A673 (cell line): ENCODE measurements at regions of chr4 and their contacts with region 1.

Region 1: GRCh38 chr4:89434364-89434988 is 126.9 kb upstream of the GPRIN3 start:
- DNase-seq: peak; percentile 25
- H3K4me3 ChIP-seq: no peak overlapping the region
- H3K27ac ChIP-seq: no peak overlapping the region
- H3K4me1 ChIP-seq: no peaks in the 10 kb centered on the region
- H3K27me3 ChIP-seq: no peaks in the 10 kb centered on the region
- CTCF ChIP-seq: peak; percentile 57

Region 2: GRCh38 chr4:88900432-88900831 is 534.0 kb before region 1 on chr4:
- CTCF ChIA-PET with region 1: no interaction called
- POLR2A ChIA-PET with region 1: no interaction called
- intact Hi-C with region 1: no loop called
- DNase-seq: no peak
- H3K4me3 ChIP-seq: no peak overlapping the region
- H3K27ac ChIP-seq: no peak overlapping the region
- H3K4me1 ChIP-seq: no peaks in the 10 kb centered on the region
- H3K27me3 ChIP-seq: no peaks in the 10 kb centered on the region
- CTCF ChIP-seq: no peak

Region 3: DNA sequence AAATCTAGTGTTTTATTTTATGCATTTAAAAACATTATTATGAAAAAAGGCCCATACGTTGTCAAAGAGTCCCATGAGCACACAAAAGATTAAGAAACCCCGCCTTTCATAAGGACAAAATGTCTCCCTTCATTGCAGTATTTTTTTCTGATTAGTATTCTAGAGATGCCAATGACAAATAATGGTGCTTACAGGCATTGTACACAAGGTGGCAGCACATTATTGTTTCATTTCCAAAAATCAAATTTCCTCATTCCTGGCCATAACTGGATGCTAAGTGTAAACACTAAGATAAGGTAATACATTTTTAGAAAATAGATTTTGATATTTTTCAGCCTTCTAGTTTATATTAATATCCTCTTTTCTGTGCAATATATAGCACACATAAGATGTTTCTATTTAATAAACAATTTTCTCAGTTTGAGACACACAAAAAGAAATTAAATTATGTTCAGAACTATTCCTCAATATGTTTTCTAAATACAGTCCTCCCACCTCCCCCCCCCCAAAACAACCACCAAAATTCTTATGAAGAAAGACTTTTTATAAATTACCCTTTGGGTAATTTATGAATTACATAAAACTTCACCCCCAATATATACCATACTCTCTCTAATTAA is 275.5 kb before region 1 on chr4:
- CTCF ChIA-PET with region 1: no interaction called
- POLR2A ChIA-PET with region 1: no interaction called
- intact Hi-C with region 1: loop called (anchors 2 kb)
- DNase-seq: peak; percentile 43
- H3K4me3 ChIP-seq: no peak overlapping the region
- H3K27ac ChIP-seq: no peak overlapping the region
- H3K4me1 ChIP-seq: no peaks in the 10 kb centered on the region
- H3K27me3 ChIP-seq: peaks cover 8% of the 10 kb centered on the region
- CTCF ChIP-seq: peak; percentile 65

Region 4: DNA sequence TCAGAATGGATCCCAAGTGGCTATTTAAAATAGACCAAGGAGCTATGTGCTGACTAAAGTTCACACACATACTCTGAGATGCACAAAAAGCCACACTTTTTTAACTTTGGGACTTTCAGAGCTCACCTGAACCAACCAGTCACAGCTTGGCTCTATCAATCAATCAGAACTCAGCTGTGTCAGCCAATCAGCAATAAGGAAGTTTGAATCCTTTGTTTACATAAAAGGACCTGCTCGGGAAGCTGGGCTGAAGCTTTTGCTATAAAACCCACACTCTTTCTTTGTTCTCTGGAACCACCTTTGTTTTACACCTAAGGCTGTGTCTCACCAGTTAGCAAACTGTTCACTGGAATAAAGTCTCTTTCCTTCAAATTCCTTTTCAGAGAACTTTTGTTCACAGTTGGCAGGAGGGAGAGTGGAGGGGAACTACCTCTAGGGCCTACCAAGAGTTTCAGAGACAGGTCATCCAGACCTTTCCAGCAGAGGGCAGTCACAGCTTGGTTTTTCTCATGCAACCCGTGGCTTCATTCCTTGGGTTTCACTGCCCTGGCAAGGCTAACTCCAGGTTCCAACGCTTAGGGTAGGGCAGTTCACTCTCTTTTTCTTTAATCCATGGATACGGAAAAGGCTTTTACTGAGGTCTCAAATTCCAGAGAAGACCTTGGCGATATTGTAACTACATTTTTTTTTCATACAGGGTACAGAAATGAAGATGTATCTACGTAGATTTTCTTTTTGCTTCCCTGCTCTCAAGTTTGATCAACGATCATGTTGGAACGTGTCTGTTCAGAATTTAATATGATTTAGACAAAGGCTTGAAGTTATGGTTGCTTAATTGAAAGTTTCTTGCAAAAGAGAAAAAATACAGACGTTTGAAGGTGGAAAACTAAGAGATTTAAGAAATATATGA is 207.6 kb before region 1 on chr4:
- CTCF ChIA-PET with region 1: no interaction called
- POLR2A ChIA-PET with region 1: no interaction called
- intact Hi-C with region 1: loop called (anchors 5 kb)
- DNase-seq: peak; percentile 59
- H3K4me3 ChIP-seq: no peak overlapping the region
- H3K27ac ChIP-seq: no peak overlapping the region
- H3K4me1 ChIP-seq: no peaks in the 10 kb centered on the region
- H3K27me3 ChIP-seq: no peaks in the 10 kb centered on the region
- CTCF ChIP-seq: peak; percentile 62

Region 5: GRCh38 chr4:89254847-89255246 is 179.6 kb before region 1 on chr4:
- CTCF ChIA-PET with region 1: no interaction called
- POLR2A ChIA-PET with region 1: no interaction called
- intact Hi-C with region 1: loop called (anchors 10 kb)
- DNase-seq: peak; percentile 10
- H3K4me3 ChIP-seq: no peak overlapping the region
- H3K27ac ChIP-seq: no peak overlapping the region
- H3K4me1 ChIP-seq: no peaks in the 10 kb centered on the region
- H3K27me3 ChIP-seq: no peaks in the 10 kb centered on the region
- CTCF ChIP-seq: peak; percentile 73

Region 6: GRCh38 chr4:89463341-89463740 is 28.9 kb after region 1 on chr4:
- CTCF ChIA-PET with region 1: no interaction called
- POLR2A ChIA-PET with region 1: no interaction called
- intact Hi-C with region 1: no loop called
- DNase-seq: no peak
- H3K4me3 ChIP-seq: no peak overlapping the region
- H3K27ac ChIP-seq: no peak overlapping the region
- H3K4me1 ChIP-seq: no peaks in the 10 kb centered on the region
- H3K27me3 ChIP-seq: no peaks in the 10 kb centered on the region
- CTCF ChIP-seq: no peak

Region 7: DNA sequence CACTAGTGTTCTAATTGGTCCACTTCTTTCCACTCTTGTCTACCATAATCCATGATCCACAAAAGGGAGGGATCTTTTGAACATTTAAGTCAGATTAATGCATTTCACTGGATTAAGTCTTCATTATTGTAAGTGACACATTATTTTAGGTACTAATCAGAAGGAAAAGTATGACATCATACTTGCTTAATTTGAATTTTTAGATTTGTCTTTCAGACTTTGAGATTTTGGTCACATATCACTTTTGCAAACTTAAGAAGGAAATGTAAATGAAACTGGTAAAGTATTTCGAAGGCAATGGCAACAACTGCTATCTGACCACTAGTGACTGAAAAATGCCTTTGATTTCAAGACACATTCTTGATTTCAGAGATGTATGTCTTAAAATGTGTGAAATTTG is 465.4 kb after region 1 on chr4:
- CTCF ChIA-PET with region 1: no interaction called
- POLR2A ChIA-PET with region 1: no interaction called
- intact Hi-C with region 1: loop called (anchors 2 kb)
- DNase-seq: no peak
- H3K4me3 ChIP-seq: no peak overlapping the region
- H3K27ac ChIP-seq: no peak overlapping the region
- H3K4me1 ChIP-seq: peaks cover 4% of the 10 kb centered on the region
- H3K27me3 ChIP-seq: no peaks in the 10 kb centered on the region
- CTCF ChIP-seq: no peak